HepG2 (cell line): ENCODE measurements at regions of chr5 and their contacts with region 1.

Region 1: DNA sequence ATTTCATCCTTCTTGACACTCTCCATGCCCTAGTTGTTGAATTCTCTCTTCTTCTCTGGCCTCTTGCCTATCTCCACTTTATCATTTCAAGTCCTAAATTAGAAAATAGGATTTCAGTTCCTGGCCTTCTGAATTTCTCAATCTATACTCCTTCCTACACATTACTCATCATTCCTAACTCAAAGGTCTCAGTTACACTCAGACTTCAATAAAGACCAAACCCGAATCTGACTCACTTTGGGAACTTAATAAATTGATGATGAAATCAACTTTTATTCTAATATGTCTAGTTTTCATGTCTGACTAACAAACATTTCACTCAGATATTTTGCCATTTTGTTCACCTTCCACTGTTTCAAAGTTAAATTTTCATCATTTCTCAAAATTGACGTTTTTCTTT is 113.6 kb upstream of the TSLP start:
- DNase-seq: no peak
- ATAC-seq: no peak
- H3K4me3 ChIP-seq: no peak overlapping the region
- H3K27ac ChIP-seq: no peak overlapping the region
- H3K4me1 ChIP-seq: no peaks in the 10 kb centered on the region
- H3K27me3 ChIP-seq: no peaks in the 10 kb centered on the region
- CTCF ChIP-seq: no peak
- EP300 ChIP-seq: no peak
- POLR2A ChIP-seq: no peak
- RAD21 ChIP-seq: no peak

Region 2: GRCh38 chr5:110896901-110897300 is 61.0 kb before region 1 on chr5:
- CTCF ChIA-PET with region 1: no interaction called
- POLR2A ChIA-PET with region 1: no interaction called
- in situ Hi-C with region 1: no loop called
- intact Hi-C with region 1: loop called (anchors 2 kb)
- DNase-seq: no peak
- ATAC-seq: no peak
- H3K4me3 ChIP-seq: no peak overlapping the region
- H3K27ac ChIP-seq: no peak overlapping the region
- H3K4me1 ChIP-seq: no peaks in the 10 kb centered on the region
- H3K27me3 ChIP-seq: no peaks in the 10 kb centered on the region
- CTCF ChIP-seq: no peak
- EP300 ChIP-seq: no peak
- POLR2A ChIP-seq: no peak
- RAD21 ChIP-seq: no peak